Left ventricle myocardium inferior (tissue), 1 donor: ENCODE measurements at regions of chr1 and their contacts with region 1.

Region 1: DNA sequence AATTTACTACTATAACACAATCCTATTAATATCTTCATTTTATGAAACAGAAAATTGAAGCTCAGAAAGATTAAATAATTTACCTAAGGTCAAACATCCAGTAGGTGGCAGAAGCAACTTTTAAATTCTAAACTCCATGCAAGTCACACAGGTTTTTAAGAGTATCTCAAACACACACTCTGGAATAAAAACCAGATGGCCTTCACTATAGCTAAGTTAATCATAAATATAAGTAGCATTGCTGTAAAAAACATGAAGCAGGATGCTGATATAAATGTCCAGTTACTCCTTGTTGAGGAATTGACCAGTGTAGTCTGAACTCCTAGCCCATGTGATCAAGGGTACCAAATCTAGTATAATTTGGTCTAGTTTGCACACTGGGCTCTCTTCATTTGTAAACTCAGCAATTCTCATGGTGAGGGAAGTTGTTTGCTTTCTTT is 9.4 kb upstream of the FMO3 start:
- DNase-seq: no peak
- H3K4me3 ChIP-seq: no peak overlapping the region
- H3K27ac ChIP-seq: peak overlapping the region; percentile 71
- H3K4me1 ChIP-seq: peaks cover 37% of the 10 kb centered on the region
- H3K27me3 ChIP-seq: no peaks in the 10 kb centered on the region
- CTCF ChIP-seq: peak; percentile 68

Region 2: GRCh38 chr1:170790175-170790574 is 291.2 kb before region 1 on chr1:
- intact Hi-C with region 1: no loop called
- DNase-seq: no peak
- H3K4me3 ChIP-seq: no peak overlapping the region
- H3K27ac ChIP-seq: no peak overlapping the region
- H3K4me1 ChIP-seq: no peaks in the 10 kb centered on the region
- H3K27me3 ChIP-seq: no peaks in the 10 kb centered on the region
- CTCF ChIP-seq: no peak

Region 3: GRCh38 chr1:170864238-170864637 is 217.1 kb before region 1 on chr1:
- intact Hi-C with region 1: no loop called
- DNase-seq: peak; percentile 14
- H3K4me3 ChIP-seq: no peak overlapping the region
- H3K27ac ChIP-seq: peak overlapping the region; percentile 45
- H3K4me1 ChIP-seq: peaks cover 27% of the 10 kb centered on the region
- H3K27me3 ChIP-seq: no peaks in the 10 kb centered on the region
- CTCF ChIP-seq: no peak

Region 4: GRCh38 chr1:170929835-170930554 is 151.3 kb before region 1 on chr1:
- intact Hi-C with region 1: no loop called
- DNase-seq: no peak
- H3K4me3 ChIP-seq: peak overlapping the region; percentile 23
- H3K27ac ChIP-seq: peak overlapping the region; percentile 68
- H3K4me1 ChIP-seq: peaks cover 10% of the 10 kb centered on the region
- H3K27me3 ChIP-seq: no peaks in the 10 kb centered on the region
- CTCF ChIP-seq: peak; percentile 79

Region 5: DNA sequence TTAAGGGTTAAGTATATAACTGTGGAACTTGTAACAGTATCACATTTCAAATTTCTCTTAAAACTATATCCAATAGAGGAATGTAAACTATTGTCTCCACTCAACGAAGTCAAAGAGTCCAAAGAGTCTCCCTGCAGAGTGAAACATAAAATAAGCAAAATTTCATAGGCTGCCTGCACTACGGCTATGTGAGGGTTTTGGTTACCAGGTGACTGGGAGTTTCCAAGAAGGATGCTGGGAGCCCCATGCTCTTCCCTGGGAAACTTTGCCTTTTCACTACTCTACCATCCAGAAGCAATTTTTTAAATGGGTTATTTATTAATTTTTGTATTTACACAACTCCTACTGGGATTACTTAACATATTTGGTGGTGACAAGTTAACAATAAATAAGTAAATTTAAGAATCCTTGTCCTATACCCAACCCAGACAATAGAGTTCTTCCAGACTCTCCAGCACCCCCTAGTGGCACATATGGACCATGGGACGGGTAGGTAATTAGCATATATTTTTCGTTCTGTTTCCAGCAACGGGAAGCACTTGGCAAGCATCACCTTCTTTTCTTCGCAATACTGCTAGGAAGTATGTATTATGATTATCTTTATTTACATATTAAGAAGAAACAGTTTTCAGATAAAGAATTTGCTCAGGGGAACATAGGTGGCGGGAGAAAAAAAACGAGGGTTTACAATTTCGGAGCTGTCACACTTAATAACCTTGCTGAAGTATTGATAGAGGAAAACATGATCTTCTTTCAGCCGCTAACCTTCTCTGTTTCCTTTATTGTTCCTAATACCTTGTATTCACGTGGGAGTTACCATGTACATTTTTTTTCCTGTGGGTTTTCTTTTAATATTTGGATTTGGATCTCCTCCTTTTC is 107.3 kb after region 1 on chr1:
- intact Hi-C with region 1: loop called (anchors 5 kb)
- DNase-seq: peak; percentile 41
- H3K4me3 ChIP-seq: peak overlapping the region; percentile 61
- H3K27ac ChIP-seq: peak overlapping the region; percentile 80
- H3K4me1 ChIP-seq: peaks cover 31% of the 10 kb centered on the region
- H3K27me3 ChIP-seq: no peaks in the 10 kb centered on the region
- CTCF ChIP-seq: peak; percentile 91

Region 6: DNA sequence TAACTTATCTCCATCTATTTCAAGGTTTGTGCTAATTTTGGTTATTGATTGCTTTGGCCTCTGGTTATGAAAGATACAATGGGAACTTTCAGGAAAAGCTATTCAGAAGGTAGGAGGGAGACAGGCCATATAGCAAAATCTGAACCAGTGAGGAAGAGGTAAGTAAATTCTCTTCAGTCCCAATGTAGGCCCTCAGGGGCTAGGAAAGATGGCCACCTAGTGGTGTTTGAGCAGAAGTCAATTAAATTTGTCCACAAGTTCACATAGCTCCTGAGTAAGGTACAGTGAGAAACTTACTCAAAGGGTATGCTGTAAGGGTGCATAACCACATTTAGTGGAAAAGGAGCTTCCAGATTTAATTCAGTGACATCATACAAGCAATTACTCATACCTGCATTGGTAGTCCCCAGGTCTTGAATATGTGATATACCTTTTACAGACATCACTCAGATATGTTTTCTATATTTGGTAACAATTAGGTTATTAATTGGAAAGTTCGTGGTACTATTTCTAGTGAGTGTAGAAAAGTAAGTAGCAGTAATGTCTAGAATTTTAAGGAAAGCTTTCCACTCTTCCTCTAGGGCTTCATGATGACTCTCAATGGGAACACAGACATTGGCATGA is 145.5 kb after region 1 on chr1:
- intact Hi-C with region 1: loop called (anchors 5 kb)
- DNase-seq: no peak
- H3K4me3 ChIP-seq: no peak overlapping the region
- H3K27ac ChIP-seq: no peak overlapping the region
- H3K4me1 ChIP-seq: peaks cover 18% of the 10 kb centered on the region
- H3K27me3 ChIP-seq: no peaks in the 10 kb centered on the region
- CTCF ChIP-seq: peak; percentile 91

Region 7: DNA sequence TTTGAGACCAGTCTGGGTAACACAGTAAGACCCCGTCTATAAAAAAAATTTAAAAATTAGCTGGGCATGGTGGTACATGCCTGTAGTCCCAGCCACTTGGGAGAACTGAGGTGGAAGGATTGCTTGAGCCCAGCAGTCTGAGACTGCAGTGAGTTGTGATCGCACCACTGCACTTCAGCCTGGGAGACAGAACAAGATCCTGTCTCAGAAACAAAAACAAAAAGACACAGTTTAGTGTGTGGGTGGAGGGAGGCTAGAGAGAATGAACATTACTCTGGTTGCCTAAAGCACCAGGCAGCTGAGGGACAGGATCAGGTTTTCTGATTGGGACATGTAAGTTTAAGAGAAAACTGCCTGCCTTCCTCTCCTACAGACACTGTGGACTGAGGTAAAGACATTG is 618.2 kb after region 1 on chr1:
- intact Hi-C with region 1: no loop called
- DNase-seq: no peak
- H3K4me3 ChIP-seq: no peak overlapping the region
- H3K27ac ChIP-seq: no peak overlapping the region
- H3K4me1 ChIP-seq: no peaks in the 10 kb centered on the region
- H3K27me3 ChIP-seq: no peaks in the 10 kb centered on the region
- CTCF ChIP-seq: no peak